ENCODE measurements at regions of chr16 and their contacts with region 1.

Region 1: DNA sequence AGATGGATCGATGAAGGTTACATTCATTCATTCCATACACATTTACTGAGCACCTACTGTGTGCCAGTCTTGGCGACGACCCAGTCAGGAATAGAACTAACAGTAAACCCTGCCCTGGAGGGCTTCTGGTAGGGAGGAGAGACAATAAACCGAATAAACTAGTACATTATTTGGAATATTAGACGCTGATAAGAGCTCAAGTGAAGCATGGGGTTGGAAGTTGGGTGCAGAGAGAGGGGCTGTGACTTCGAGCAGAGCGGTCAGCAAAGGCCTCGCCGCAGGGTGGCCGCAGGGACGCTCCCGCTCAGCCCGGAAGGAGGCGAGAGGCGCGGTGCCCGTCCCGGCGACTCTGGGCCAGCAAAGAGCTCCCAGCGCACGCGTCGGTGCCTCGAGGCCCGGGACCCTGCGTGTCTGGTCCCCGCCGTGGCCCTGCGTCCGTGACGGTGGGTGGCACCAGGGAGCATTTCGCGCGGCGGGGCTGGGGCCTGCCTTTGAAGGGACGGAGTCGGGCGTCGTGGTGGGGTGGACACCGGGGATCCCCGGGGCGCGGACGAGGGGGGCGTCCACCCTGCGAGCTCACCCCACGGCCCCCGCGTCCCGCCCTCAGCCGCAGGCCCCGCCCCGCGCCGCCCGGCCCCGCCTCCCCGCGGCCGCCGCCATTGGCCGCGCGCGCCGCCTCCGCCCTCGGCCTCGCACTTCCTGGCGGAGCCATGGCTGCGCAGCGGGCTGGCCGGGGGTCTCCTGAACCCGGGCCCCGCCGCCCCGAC is at the start of gene KLHL36:
- DNase-seq: peak; percentile 59 to 89 (median 70)
- ATAC-seq: peak; percentile 92
- H3K4me3 ChIP-seq: peak within 1 kb of the TSS; percentile 73
- H3K4me3 Mint-ChIP-seq: peak within 1 kb of the TSS; percentile 86 to 98 (median 93)
- H3K27ac ChIP-seq: peak within 1 kb of the TSS; percentile 81
- H3K27ac Mint-ChIP-seq: peak within 1 kb of the TSS; percentile 85 to 99 (median 92)
- H3K4me1 ChIP-seq: peaks cover 19 to 41% of the 10 kb centered on the region in 2 donors
- H3K4me1 Mint-ChIP-seq: peaks cover 38 to 54% (median 49%) of the 10 kb centered on the region in 7 donors
- H3K27me3 ChIP-seq: no peaks in the 10 kb centered on the region
- H3K27me3 Mint-ChIP-seq: peaks cover 0 to 35% (median 0%) of the 10 kb centered on the region in 5 donors
- total RNA-seq, gene KLHL36: 51.8 to 161 (median 97.8) TPM

Region 2: GRCh38 chr16:84282533-84282932 is 365.5 kb before region 1 on chr16:
- CTCF ChIA-PET with region 1: no interaction called
- POLR2A ChIA-PET with region 1: no interaction called
- intact Hi-C with region 1: no loop called
- DNase-seq: no peak
- ATAC-seq: no peak
- H3K4me3 ChIP-seq: no peak overlapping the region
- H3K4me3 Mint-ChIP-seq: no peak overlapping the region
- H3K27ac ChIP-seq: no peak overlapping the region
- H3K27ac Mint-ChIP-seq: no peak overlapping the region
- H3K4me1 ChIP-seq: no peaks in the 10 kb centered on the region
- H3K4me1 Mint-ChIP-seq: no peaks in the 10 kb centered on the region
- H3K27me3 ChIP-seq: no peaks in the 10 kb centered on the region
- H3K27me3 Mint-ChIP-seq: peaks cover 0 to 10% (median 5%) of the 10 kb centered on the region in 5 donors

Region 3: GRCh38 chr16:84599521-84600202 is 48.3 kb before region 1 on chr16:
- CTCF ChIA-PET with region 1: no interaction called
- POLR2A ChIA-PET with region 1: interaction called, 6 read pairs
- intact Hi-C with region 1: loop called in 1 of 2 experiments (anchors 2 kb)
- DNase-seq: peak in 6 of 9 donors; percentile 41 to 78 (median 50)
- ATAC-seq: peak; percentile 39
- H3K4me3 ChIP-seq: peak overlapping the region; percentile 44
- H3K4me3 Mint-ChIP-seq: peak overlapping the region; percentile 78 to 94 (median 87)
- H3K27ac ChIP-seq: peak overlapping the region; percentile 87
- H3K27ac Mint-ChIP-seq: peak overlapping the region; percentile 90 to 98 (median 97)
- H3K4me1 ChIP-seq: peaks cover 82 to 90% of the 10 kb centered on the region in 2 donors
- H3K4me1 Mint-ChIP-seq: peaks cover 73 to 94% (median 88%) of the 10 kb centered on the region in 7 donors
- H3K27me3 ChIP-seq: no peaks in the 10 kb centered on the region
- H3K27me3 Mint-ChIP-seq: peaks cover 0 to 4% (median 0%) of the 10 kb centered on the region in 5 donors

Region 4: DNA sequence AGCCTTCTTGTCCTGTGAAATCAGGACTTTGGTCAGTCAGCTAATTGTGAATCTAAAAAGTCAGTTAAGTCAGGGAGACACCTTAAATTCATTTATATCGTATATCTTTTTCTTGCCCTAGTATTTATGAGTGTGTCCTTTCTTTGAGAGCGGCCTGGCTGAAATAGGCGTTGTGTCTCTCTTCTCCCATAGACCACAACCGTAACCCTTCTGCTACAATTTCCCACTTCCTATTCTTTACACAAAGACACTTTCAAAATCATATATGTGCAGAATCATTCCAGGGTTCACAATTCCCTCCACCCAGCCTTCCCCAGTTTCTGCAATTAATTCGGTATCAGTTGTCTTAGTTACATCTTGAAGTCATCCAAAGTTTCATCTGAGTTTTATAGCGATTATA is 16.1 kb before region 1 on chr16:
- CTCF ChIA-PET with region 1: interaction called, 4 read pairs
- POLR2A ChIA-PET with region 1: interaction called, 11 read pairs
- intact Hi-C with region 1: loop called in 1 of 2 experiments (anchors 2 kb)
- DNase-seq: no peak
- ATAC-seq: peak; percentile 42
- H3K4me3 ChIP-seq: no peak overlapping the region
- H3K4me3 Mint-ChIP-seq: peak overlapping the region; percentile 33 to 75 (median 64)
- H3K27ac ChIP-seq: no peak overlapping the region
- H3K27ac Mint-ChIP-seq: peak overlapping the region in 6 of 9 donors; percentile 21 to 91 (median 56)
- H3K4me1 ChIP-seq: peaks cover 0 to 30% of the 10 kb centered on the region in 2 donors
- H3K4me1 Mint-ChIP-seq: peaks cover 27 to 44% (median 39%) of the 10 kb centered on the region in 7 donors
- H3K27me3 ChIP-seq: no peaks in the 10 kb centered on the region
- H3K27me3 Mint-ChIP-seq: peaks cover 0 to 67% (median 0%) of the 10 kb centered on the region in 5 donors

Region 5: GRCh38 chr16:84663433-84664101 is 15.6 kb after region 1 on chr16:
- CTCF ChIA-PET with region 1: interaction called, 3 read pairs
- POLR2A ChIA-PET with region 1: interaction called, 10 read pairs
- intact Hi-C with region 1: loop called in 1 of 2 experiments (anchors 1 kb)
- DNase-seq: no peak
- ATAC-seq: no peak
- H3K4me3 ChIP-seq: no peak overlapping the region
- H3K4me3 Mint-ChIP-seq: no peak overlapping the region
- H3K27ac ChIP-seq: no peak overlapping the region
- H3K27ac Mint-ChIP-seq: peak overlapping the region in 3 of 9 donors; percentile 5 to 67 (median 41)
- H3K4me1 ChIP-seq: no peaks in the 10 kb centered on the region
- H3K4me1 Mint-ChIP-seq: peaks cover 18 to 40% (median 22%) of the 10 kb centered on the region in 7 donors
- H3K27me3 ChIP-seq: no peaks in the 10 kb centered on the region
- H3K27me3 Mint-ChIP-seq: no peaks in the 10 kb centered on the region

Region 6: DNA sequence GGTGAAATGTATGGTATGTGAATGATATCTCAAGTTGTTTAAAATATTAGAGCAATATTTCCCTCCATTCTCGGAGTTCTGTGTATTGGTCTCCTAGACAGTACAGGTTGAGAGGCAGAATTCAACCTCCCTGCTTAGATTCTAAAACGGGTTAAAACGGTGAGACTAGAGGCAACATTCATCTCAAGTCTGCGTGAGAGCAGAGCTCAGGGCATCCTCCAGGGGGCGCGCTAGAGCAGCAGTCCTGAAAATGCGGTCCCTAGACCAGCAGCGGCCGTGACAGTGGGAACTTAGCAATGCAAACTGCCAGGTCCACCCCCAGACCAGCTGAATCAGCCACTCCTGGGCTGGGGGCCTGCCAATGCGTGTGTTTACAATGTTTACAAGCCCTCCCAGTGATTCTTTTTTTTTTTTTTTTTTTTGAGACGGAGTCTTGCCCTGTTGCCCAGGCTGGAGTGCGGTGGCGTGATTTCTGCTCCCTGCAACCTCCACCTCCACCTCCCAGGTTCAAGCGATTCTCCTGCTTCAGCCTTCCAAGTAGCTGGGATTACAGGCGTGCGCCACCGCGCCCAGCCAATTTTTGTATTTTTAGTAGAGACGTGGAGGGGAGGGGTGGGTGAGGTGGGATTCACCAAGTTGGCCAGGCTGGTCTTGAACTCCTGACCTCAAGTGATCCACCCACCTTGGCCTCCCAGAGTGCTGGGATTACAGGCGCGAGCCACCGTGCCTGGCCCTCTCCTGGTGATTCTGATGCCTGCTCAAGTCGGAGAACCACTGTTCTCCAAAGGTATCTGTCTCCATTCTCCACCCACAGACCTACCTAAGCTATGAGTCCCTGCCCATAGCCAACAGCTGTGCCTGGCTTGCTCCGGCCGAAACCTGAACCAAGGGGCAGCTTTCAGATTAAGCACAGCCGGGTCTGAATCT is 24.5 kb after region 1 on chr16:
- CTCF ChIA-PET with region 1: interaction called, 9 read pairs
- POLR2A ChIA-PET with region 1: interaction called, 3 read pairs
- intact Hi-C with region 1: loop called in 1 of 2 experiments (anchors 1 kb)
- DNase-seq: peak; percentile 58 to 85 (median 74)
- ATAC-seq: peak; percentile 96
- H3K4me3 ChIP-seq: no peak overlapping the region
- H3K4me3 Mint-ChIP-seq: no peak overlapping the region
- H3K27ac ChIP-seq: no peak overlapping the region
- H3K27ac Mint-ChIP-seq: peak overlapping the region in 3 of 9 donors; percentile 6 to 54 (median 52)
- H3K4me1 ChIP-seq: no peaks in the 10 kb centered on the region
- H3K4me1 Mint-ChIP-seq: peaks cover 5 to 17% (median 8%) of the 10 kb centered on the region in 7 donors
- H3K27me3 ChIP-seq: no peaks in the 10 kb centered on the region
- H3K27me3 Mint-ChIP-seq: peaks cover 0 to 19% (median 0%) of the 10 kb centered on the region in 5 donors

Region 7: DNA sequence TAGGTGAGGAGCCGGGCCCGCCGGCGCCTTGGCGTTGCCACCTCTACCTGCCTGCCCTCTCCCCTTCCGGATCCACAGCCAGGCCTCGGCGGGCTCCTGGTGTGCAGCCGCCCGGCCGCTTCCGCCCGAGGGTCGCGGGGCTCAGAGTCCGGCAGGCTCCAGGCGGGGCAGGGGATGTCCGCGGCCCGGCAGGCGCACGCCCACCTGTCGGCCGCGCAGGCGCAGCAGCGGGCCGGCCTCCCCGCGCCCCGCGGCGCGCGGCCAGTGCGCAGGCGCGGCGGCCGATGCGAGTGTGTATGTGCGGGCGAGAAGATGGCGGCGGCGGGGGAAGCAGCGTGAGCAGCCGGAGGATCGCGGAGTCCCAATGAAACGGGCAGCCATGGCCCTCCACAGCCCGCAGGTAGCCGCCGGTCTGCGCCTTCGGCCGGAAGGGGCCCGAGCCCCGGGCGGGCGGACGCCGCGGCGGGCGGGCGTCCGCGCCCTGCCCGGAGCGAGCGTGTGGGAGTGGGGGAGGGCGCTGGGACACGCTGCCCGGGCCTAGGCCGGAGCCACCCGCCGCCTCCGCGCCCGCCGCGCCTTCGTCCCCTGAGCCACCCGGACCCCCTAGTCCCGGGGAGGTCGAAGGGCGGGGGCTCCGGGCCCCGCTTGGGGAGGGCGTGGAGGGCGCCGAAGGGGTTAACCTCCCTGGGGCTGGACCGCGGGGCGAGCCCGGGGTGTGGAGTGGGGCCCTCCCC is 51.9 kb after region 1 on chr16 and contains the start of gene USP10:
- CTCF ChIA-PET with region 1: no interaction called
- POLR2A ChIA-PET with region 1: interaction called, 5 read pairs
- intact Hi-C with region 1: loop called in 1 of 2 experiments (anchors 2 kb)
- DNase-seq: peak; percentile 75 to 93 (median 88)
- ATAC-seq: peak; percentile 91
- H3K4me3 ChIP-seq: peak within 1 kb of the TSS; percentile 61
- H3K4me3 Mint-ChIP-seq: peak within 1 kb of the TSS; percentile 92 to 99 (median 98)
- H3K27ac ChIP-seq: peak within 1 kb of the TSS; percentile 87
- H3K27ac Mint-ChIP-seq: peak within 1 kb of the TSS; percentile 92 to 99 (median 96)
- H3K4me1 ChIP-seq: peaks cover 11 to 22% of the 10 kb centered on the region in 2 donors
- H3K4me1 Mint-ChIP-seq: peaks cover 19 to 46% (median 42%) of the 10 kb centered on the region in 7 donors
- H3K27me3 ChIP-seq: no peaks in the 10 kb centered on the region
- H3K27me3 Mint-ChIP-seq: peaks cover 0 to 4% (median 0%) of the 10 kb centered on the region in 5 donors
- total RNA-seq, gene USP10: 88.4 to 113 (median 112) TPM

Region 8: GRCh38 chr16:85126705-85127419 is 478.9 kb after region 1 on chr16:
- CTCF ChIA-PET with region 1: no interaction called
- POLR2A ChIA-PET with region 1: no interaction called
- intact Hi-C with region 1: no loop called
- DNase-seq: peak in 1 of 9 donors; percentile 45
- ATAC-seq: no peak
- H3K4me3 ChIP-seq: no peak overlapping the region
- H3K4me3 Mint-ChIP-seq: no peak overlapping the region
- H3K27ac ChIP-seq: no peak overlapping the region
- H3K27ac Mint-ChIP-seq: no peak overlapping the region
- H3K4me1 ChIP-seq: no peaks in the 10 kb centered on the region
- H3K4me1 Mint-ChIP-seq: peaks cover 0 to 10% (median 9%) of the 10 kb centered on the region in 7 donors
- H3K27me3 ChIP-seq: no peaks in the 10 kb centered on the region
- H3K27me3 Mint-ChIP-seq: no peaks in the 10 kb centered on the region

Measured in naive thymus-derived CD4-positive, alpha-beta T cell (primary cell).